Aorta (tissue), 5 donors: ENCODE measurements at regions of chr21 and their contacts with region 1.

Region 1: DNA sequence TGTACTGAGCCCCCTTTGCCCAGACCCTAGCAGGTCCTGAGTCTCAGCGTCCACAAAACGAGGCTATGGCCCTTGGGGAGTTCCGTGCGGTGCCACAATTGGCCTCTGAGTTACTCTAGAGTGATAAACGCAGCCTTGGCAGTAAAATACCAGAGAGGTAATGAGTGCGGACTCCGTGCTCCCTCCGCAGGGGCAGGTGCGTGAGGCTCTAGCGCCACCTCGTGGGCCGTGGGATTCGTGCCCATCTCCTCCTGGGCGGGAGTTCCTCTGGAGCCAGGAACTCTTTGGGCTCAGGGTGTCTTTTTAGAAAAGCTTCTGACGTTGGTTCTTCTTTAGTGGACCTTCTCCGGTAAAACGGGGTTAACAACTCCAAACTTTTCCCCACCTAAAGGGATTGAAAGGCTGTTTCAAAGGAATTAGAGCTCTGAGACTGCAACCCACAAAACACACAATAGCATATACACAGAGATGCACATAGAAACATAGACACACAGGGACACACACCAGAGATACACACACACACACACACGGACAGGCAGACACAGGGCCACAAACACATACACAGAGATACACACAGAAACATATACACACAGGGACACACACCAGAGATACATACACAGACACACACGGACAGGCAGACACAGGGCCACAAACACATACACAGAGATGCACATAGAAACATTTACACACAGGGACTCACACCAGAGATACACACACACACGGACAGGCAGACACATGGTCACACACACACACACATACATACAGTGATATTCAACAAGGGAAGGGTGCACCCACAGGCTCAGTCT is 99.4 kb downstream of the KCNJ15 start:
- DNase-seq: peak; percentile 89 to 96
- ATAC-seq: peak; percentile 83
- H3K4me3 ChIP-seq: no peak overlapping the region
- H3K27ac ChIP-seq: no peak overlapping the region
- H3K4me1 ChIP-seq: peaks cover 0 to 2% of the 10 kb centered on the region in 2 donors
- H3K27me3 ChIP-seq: no peaks in the 10 kb centered on the region

Region 2: DNA sequence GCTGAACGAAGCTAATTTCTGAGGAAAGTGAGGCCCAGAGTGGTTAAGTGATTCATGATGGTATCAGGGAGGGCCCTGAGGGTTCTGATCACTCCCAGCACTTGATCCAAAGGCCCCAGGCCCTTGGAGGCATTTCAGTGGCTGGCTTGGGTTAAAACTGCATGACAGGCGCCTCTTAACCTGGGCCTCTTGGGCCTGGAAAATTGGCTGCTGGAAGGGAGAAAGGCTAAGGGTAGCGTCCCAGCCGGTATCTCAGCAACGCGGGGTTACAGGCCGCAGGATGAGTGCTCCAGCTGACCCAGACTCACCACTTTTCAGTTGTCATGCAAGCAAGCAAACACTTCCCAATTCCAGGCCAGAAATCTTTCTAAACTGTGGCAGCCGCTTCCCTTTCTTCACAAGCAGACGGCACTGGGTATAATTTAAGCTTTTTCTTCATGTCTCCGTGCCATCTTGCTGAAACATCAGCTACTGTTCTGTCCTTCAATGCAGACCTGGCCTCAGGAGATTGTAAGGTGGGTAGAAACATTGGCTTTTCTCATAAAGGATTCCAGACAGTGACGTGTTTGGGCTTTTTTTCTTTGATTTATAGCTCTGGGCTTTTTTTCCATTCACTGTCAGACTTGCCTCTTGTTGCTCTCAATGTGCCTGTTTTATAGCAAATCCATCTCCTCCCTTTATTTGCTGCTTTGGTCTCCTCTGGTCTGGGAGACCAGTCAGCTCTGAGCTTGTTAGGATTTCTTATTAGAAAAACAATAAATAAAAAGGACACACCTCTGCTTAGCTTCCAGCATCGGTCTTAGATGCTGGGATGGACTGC is 669.0 kb before region 1 on chr21:
- intact Hi-C with region 1: loop called in 1 of 2 experiments (anchors 5 kb)
- DNase-seq: no peak
- ATAC-seq: no peak
- H3K4me3 ChIP-seq: no peak overlapping the region
- H3K27ac ChIP-seq: no peak overlapping the region
- H3K4me1 ChIP-seq: no peaks in the 10 kb centered on the region
- H3K27me3 ChIP-seq: no peaks in the 10 kb centered on the region

Region 3: GRCh38 chr21:37711836-37712568 is 644.2 kb before region 1 on chr21:
- intact Hi-C with region 1: loop called in 1 of 2 experiments (anchors 5 kb)
- DNase-seq: peak; percentile 81 to 89
- ATAC-seq: peak; percentile 82
- H3K4me3 ChIP-seq: no peak overlapping the region
- H3K27ac ChIP-seq: no peak overlapping the region
- H3K4me1 ChIP-seq: peaks cover 0 to 2% of the 10 kb centered on the region in 2 donors
- H3K27me3 ChIP-seq: no peaks in the 10 kb centered on the region

Region 4: DNA sequence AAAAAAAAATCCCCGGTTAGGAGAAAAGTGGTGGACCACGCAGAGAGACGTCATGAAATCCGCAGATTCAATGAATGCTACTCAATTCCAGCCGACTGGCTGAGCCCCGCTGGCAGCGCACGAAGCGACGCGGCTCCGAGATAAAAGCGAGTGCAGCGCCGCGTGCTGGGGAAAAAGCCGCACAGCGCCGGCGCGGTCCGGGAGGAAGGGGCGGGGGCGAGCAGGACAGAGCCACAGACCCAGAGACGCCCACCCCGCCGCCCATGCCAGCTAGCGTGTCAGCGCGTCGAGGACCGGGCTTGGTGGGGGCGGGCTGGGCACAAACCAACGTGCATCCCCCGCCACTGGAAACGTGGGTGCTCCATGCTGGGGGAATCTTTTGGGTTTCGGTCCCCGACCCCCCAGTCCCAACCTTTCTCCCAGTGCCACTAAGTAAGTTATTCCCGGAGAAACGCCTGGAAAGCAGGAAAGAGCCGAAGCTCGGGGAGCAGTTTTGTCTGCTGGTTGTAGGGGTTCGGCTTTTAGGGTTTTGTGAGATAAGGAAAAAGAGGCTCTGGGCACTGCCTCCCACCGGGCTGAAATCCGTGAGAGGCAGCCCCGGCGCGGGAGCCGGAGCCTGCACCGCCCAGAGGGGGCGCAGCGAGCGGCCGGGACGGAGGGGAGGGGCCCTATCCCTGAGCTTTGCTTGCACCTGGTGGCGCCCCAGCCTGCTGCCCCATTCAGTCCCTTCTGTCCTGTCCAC is 439.7 kb before region 1 on chr21 and contains the start of gene KCNJ6:
- intact Hi-C with region 1: loop called in 1 of 2 experiments (anchors 10 kb)
- DNase-seq: peak in 1 of 2 donors; percentile 56
- ATAC-seq: peak; percentile 48
- H3K4me3 ChIP-seq: peak within 1 kb of the TSS in 1 of 2 donors; percentile 11
- H3K27ac ChIP-seq: no peak within 1 kb of the TSS
- H3K4me1 ChIP-seq: no peaks in the 10 kb centered on the region
- H3K27me3 ChIP-seq: peaks cover 0 to 2% of the 10 kb centered on the region in 2 donors
- total RNA-seq, gene KCNJ6: 0.16 TPM in 1 of 2 donors, not detected in the other

Region 5: GRCh38 chr21:38170280-38170679 is 185.9 kb before region 1 on chr21:
- intact Hi-C with region 1: loop called (anchors 2 to 5 kb)
- DNase-seq: peak in 1 of 2 donors; percentile 67
- ATAC-seq: peak; percentile 66
- H3K4me3 ChIP-seq: no peak overlapping the region
- H3K27ac ChIP-seq: no peak overlapping the region
- H3K4me1 ChIP-seq: peaks cover 0 to 8% of the 10 kb centered on the region in 2 donors
- H3K27me3 ChIP-seq: no peaks in the 10 kb centered on the region

Region 6: DNA sequence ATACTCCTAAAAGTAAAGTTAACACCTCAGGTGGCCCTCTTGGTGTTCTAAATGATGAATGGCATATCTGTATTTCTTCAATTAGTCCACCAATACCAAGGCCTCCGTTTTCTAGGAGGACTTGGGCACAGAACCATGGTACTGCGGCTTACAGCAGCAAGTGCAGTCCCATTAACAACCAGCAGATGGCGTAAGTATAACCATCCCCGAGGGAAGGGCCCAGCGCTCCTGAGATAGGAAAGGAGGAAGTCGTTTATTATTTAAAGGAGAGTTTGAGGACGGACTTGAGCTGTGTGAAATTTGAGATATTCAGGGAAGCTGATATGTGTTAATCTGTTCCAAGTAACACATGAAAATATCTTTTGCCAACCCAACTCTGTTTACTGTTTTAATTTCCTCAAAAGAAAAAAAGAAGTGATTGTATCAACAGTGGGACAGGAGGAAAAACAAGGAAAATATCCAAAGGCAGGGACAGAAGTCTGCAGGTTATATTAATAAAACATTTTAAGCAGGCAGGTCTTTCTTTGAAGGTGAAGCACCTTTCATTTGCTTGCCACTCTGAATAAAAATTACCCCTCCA is 137.1 kb before region 1 on chr21:
- intact Hi-C with region 1: loop called (anchors 2 kb)
- DNase-seq: peak; percentile 81 to 83
- ATAC-seq: peak; percentile 89
- H3K4me3 ChIP-seq: no peak overlapping the region
- H3K27ac ChIP-seq: peak overlapping the region; percentile 51 to 71
- H3K4me1 ChIP-seq: peaks cover 0 to 2% of the 10 kb centered on the region in 2 donors
- H3K27me3 ChIP-seq: no peaks in the 10 kb centered on the region

Region 7: GRCh38 chr21:38244885-38245545 is 111.2 kb before region 1 on chr21:
- intact Hi-C with region 1: loop called in 1 of 2 experiments (anchors 5 kb)
- DNase-seq: no peak
- ATAC-seq: no peak
- H3K4me3 ChIP-seq: no peak overlapping the region
- H3K27ac ChIP-seq: no peak overlapping the region
- H3K4me1 ChIP-seq: peaks cover 0 to 3% of the 10 kb centered on the region in 2 donors
- H3K27me3 ChIP-seq: no peaks in the 10 kb centered on the region